CD4-positive, alpha-beta T cell (primary cell): ENCODE measurements at regions of chr4 and their contacts with region 1.

Region 1: GRCh38 chr4:75989846-75990528 is 758 bp downstream of the SDAD1 start:
- DNase-seq: peak in 3 of 14 experiments; percentile 10 to 23 (median 21)
- ATAC-seq: no peak
- H3K4me3 ChIP-seq: peak overlapping the region; percentile 95
- H3K4me3 Mint-ChIP-seq: peak overlapping the region; percentile 99
- H3K27ac ChIP-seq: peak overlapping the region; percentile 37 to 52
- H3K27ac Mint-ChIP-seq: peak overlapping the region; percentile 93
- H3K4me1 ChIP-seq: peaks cover 40% of the 10 kb centered on the region
- H3K4me1 Mint-ChIP-seq: peaks cover 42% of the 10 kb centered on the region
- H3K27me3 ChIP-seq: no peaks in the 10 kb centered on the region
- H3K27me3 Mint-ChIP-seq: no peaks in the 10 kb centered on the region
- CTCF ChIP-seq: no peak

Region 2: GRCh38 chr4:75940692-75941253 is 49.2 kb before region 1 on chr4 and contains the start of gene NAAA:
- CTCF ChIA-PET with region 1: interaction called, 3 read pairs
- POLR2A ChIA-PET with region 1: interaction called, 31 read pairs
- intact Hi-C with region 1: loop called in 1 of 2 experiments (anchors 2 kb)
- DNase-seq: peak; percentile 51 to 93 (median 72)
- ATAC-seq: peak; percentile 83
- H3K4me3 ChIP-seq: peak within 1 kb of the TSS; percentile 86
- H3K4me3 Mint-ChIP-seq: peak within 1 kb of the TSS; percentile 100
- H3K27ac ChIP-seq: peak within 1 kb of the TSS; percentile 79 to 86
- H3K27ac Mint-ChIP-seq: peak within 1 kb of the TSS; percentile 95
- H3K4me1 ChIP-seq: peaks cover 20% of the 10 kb centered on the region
- H3K4me1 Mint-ChIP-seq: peaks cover 27% of the 10 kb centered on the region
- H3K27me3 ChIP-seq: no peaks in the 10 kb centered on the region
- H3K27me3 Mint-ChIP-seq: no peaks in the 10 kb centered on the region
- CTCF ChIP-seq: no peak
- total RNA-seq, gene NAAA: 32.6 to 33.3 TPM

Region 3: GRCh38 chr4:75973766-75974165 is 16.2 kb before region 1 on chr4:
- CTCF ChIA-PET with region 1: no interaction called
- POLR2A ChIA-PET with region 1: no interaction called
- intact Hi-C with region 1: no loop called
- DNase-seq: no peak
- ATAC-seq: no peak
- H3K4me3 ChIP-seq: no peak overlapping the region
- H3K4me3 Mint-ChIP-seq: no peak overlapping the region
- H3K27ac ChIP-seq: no peak overlapping the region
- H3K27ac Mint-ChIP-seq: no peak overlapping the region
- H3K4me1 ChIP-seq: no peaks in the 10 kb centered on the region
- H3K4me1 Mint-ChIP-seq: no peaks in the 10 kb centered on the region
- H3K27me3 ChIP-seq: no peaks in the 10 kb centered on the region
- H3K27me3 Mint-ChIP-seq: no peaks in the 10 kb centered on the region
- CTCF ChIP-seq: no peak

Region 4: DNA sequence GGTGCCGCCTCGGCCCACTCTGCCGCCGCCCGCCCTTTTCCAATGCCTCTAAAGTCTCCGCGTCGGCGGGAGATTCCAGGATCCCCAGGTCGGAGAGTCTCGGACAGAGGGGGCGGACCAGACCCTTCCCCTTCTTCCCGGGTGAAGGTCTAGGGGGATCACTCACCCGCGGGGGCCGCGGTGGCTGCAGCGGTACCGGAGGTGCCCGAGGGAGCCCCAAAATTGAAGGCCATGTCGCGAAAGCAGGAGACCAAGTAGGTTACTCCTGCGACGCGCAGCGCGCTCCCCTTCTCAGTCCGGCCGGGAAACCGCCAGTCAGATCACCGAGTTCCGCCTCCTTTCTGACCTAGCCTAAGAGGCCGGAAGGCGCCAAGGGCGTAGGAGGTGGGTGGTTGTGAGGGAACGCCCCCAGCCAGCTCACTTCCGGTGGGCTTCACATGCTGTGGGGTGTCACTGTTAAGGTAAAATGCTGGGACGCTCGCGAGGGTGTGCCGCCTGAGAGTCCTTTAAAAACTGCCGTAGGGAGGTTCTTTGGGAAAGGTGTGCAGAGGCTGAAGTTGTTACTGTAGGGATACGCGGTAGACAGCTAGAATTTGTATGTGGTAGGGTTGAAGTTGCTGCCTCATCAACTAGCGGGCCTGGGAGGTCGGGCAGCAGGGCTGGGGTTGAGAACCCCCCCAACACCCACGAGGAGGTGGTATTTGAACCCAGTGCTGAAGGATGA is 158.3 kb after region 1 on chr4 and contains the start of gene NUP54:
- CTCF ChIA-PET with region 1: no interaction called
- POLR2A ChIA-PET with region 1: interaction called, 11 read pairs
- intact Hi-C with region 1: loop called (anchors 2 kb)
- DNase-seq: peak; percentile 90 to 97 (median 93)
- ATAC-seq: peak; percentile 97
- H3K4me3 ChIP-seq: peak within 1 kb of the TSS; percentile 95
- H3K4me3 Mint-ChIP-seq: peak within 1 kb of the TSS; percentile 99
- H3K27ac ChIP-seq: peak within 1 kb of the TSS; percentile 80 to 90
- H3K27ac Mint-ChIP-seq: peak within 1 kb of the TSS; percentile 92
- H3K4me1 ChIP-seq: peaks cover 15% of the 10 kb centered on the region
- H3K4me1 Mint-ChIP-seq: peaks cover 38% of the 10 kb centered on the region
- H3K27me3 ChIP-seq: no peaks in the 10 kb centered on the region
- H3K27me3 Mint-ChIP-seq: no peaks in the 10 kb centered on the region
- CTCF ChIP-seq: no peak
- total RNA-seq, gene NUP54: 94.1 to 108 TPM